Transverse colon (tissue), 4 donors: ENCODE measurements at regions of chr3 and their contacts with region 1.

Region 1: DNA sequence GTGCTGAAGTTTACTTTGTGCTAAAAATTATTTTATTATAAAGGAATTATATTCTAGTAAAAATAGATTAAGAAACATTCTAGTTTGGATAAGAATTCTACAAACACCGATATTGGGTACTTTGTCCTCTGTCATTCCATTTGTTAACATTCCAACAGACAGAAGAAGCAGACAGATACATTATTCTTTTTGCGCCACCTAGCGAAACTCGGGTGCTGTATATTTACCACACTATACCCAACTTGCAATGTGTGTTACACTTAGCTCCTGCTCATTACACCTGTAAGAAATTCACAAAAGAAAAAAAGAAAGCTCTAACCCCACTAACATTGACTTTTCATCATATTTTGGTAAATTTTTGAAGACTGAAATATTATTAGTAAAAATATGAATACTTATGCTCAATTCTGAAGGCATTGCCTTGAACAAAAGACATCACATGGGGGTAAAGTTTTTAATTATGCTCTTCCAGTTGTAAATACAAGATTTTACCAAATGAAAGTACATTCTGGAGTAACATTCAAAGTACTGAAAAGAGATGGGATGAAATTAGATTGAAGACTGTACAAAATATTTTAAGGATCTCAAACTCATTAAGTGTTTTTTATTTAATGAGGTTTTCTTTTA is 136.5 kb upstream of the MLF1 start:
- DNase-seq: peak; percentile 55
- H3K4me3 ChIP-seq: no peak overlapping the region
- H3K27ac ChIP-seq: no peak overlapping the region
- H3K4me1 ChIP-seq: no peaks in the 10 kb centered on the region
- H3K27me3 ChIP-seq: no peaks in the 10 kb centered on the region
- CTCF ChIP-seq: peak; percentile 61 to 72 (median 67)
- EP300 ChIP-seq: no peak
- POLR2A ChIP-seq: no peak

Region 2: GRCh38 chr3:156948402-156949210 is 1485.9 kb before region 1 on chr3:
- in situ Hi-C with region 1: no loop called
- intact Hi-C with region 1: no loop called
- DNase-seq: no peak
- H3K4me3 ChIP-seq: no peak overlapping the region
- H3K27ac ChIP-seq: no peak overlapping the region
- H3K4me1 ChIP-seq: no peaks in the 10 kb centered on the region
- H3K27me3 ChIP-seq: no peaks in the 10 kb centered on the region
- CTCF ChIP-seq: no peak
- EP300 ChIP-seq: no peak
- POLR2A ChIP-seq: no peak

Region 3: DNA sequence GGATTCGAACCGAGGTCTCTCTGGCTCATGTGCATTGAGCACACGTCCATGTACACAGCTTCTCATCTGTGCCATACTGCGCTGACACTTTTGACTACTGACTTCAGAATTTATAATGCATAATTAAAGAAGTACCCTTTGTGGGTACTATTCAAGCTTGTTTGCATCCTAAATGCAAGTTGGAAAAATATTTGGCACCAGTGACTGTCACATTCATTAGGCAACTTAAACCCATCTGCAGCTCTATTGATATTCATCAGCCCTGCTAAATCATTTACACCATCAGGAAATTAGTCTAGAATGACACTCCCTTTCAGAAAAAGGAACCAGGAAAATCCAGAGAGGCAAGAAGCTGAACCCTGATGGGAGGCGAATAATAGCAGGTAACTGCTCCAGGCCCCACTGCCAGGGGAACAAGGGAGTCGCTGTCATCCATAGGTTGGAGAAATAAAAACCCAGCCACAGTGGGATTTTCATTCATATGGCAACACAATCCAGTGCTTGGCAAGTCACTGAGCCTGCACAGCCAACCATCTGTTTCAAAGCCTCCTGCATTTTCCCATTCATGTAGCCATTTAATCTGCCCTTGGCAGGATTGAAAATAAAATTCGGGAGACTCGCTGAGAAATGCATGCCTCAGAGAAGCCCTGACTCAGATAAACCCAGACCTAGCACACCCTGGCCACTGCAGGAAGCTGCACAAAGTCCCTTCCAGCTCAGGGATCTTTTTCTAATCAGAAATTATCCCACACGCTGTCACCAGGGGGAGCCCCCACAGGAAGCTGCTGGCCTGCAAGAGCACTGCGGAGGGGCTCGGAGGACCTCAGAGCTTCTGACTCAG is 828.3 kb before region 1 on chr3:
- in situ Hi-C with region 1: loop called (anchors 10 to 25 kb)
- intact Hi-C with region 1: no loop called
- DNase-seq: peak; percentile 45
- H3K4me3 ChIP-seq: no peak overlapping the region
- H3K27ac ChIP-seq: no peak overlapping the region
- H3K4me1 ChIP-seq: peaks cover 0 to 4% (median 0%) of the 10 kb centered on the region in 4 donors
- H3K27me3 ChIP-seq: no peaks in the 10 kb centered on the region
- CTCF ChIP-seq: peak; percentile 37 to 67 (median 64)
- EP300 ChIP-seq: no peak
- POLR2A ChIP-seq: no peak

Region 4: DNA sequence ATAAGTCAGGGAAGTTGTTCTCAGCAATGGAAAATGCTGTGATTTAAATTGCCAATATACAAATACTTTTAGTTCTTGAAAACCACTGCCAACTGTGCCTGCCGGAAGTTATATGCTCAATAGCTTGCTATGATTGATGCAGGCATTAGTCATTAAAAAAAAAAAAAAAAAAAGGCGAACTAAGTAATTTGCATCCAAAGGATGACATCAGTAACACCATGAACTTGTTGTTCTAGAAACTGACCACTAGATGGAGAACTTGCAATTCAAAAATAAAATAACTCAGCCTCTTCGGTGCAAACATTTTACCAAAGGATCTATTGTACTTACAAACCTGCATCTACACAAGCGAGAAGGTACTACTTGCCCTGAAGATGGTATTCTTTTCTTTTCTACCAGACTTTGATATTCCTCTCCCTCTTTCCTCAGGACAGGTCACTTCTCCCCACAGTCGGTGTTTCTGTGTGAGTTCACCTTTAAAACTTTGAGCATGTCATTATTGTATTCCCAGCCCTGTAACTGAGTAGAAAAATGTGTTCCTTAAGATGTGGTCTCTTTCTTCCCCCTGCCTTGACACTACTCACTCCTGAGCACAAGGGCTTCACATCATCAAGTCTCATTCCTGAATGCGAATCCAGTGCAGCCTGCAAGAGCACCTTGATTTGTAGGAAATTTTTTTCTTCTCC is 816.3 kb before region 1 on chr3:
- in situ Hi-C with region 1: loop called (anchors 10 to 25 kb)
- intact Hi-C with region 1: loop called (anchors 5 kb)
- DNase-seq: no peak
- H3K4me3 ChIP-seq: no peak overlapping the region
- H3K27ac ChIP-seq: no peak overlapping the region
- H3K4me1 ChIP-seq: no peaks in the 10 kb centered on the region
- H3K27me3 ChIP-seq: peaks cover 9% of the 10 kb centered on the region
- CTCF ChIP-seq: peak; percentile 57 to 68 (median 65)
- EP300 ChIP-seq: no peak
- POLR2A ChIP-seq: no peak

Region 5: GRCh38 chr3:157865352-157866000 is 569.0 kb before region 1 on chr3:
- in situ Hi-C with region 1: loop called in 2 of 4 experiments (anchors 10 to 25 kb)
- intact Hi-C with region 1: no loop called
- DNase-seq: peak; percentile 54
- H3K4me3 ChIP-seq: no peak overlapping the region
- H3K27ac ChIP-seq: no peak overlapping the region
- H3K4me1 ChIP-seq: no peaks in the 10 kb centered on the region
- H3K27me3 ChIP-seq: no peaks in the 10 kb centered on the region
- CTCF ChIP-seq: peak; percentile 53 to 65 (median 57)
- EP300 ChIP-seq: no peak
- POLR2A ChIP-seq: no peak